Activated naive CD4-positive, alpha-beta T cell treated with anti-CD3 and anti-CD28 coated beads for 36 hours (primary cell): ENCODE measurements at regions of chr19 and their contacts with region 1.

Region 1: DNA sequence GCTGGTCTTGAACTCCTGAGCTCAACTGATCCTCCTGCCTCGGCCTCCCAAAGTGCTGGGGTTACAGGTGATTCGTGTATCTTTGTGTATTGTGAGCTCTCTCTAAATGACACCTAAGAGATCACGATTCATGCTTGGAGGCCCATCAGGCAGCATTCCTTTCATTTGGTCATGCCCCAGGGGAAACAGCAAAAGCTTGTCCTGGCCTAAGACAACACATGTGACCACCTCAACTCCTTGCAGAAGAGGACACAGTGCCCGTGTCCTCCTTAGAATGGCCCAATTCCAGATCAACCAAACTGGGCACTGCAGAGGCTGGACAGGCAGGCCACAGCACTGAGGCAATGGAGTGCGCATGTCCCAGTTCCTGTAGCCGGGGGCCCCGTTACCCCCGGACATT is 32.5 kb downstream of the ZC3H4 start:
- DNase-seq: no peak
- H3K4me3 Mint-ChIP-seq: no peak overlapping the region
- H3K27ac Mint-ChIP-seq: peak overlapping the region; percentile 66
- H3K4me1 Mint-ChIP-seq: no peaks in the 10 kb centered on the region
- H3K27me3 Mint-ChIP-seq: no peaks in the 10 kb centered on the region

Region 2: DNA sequence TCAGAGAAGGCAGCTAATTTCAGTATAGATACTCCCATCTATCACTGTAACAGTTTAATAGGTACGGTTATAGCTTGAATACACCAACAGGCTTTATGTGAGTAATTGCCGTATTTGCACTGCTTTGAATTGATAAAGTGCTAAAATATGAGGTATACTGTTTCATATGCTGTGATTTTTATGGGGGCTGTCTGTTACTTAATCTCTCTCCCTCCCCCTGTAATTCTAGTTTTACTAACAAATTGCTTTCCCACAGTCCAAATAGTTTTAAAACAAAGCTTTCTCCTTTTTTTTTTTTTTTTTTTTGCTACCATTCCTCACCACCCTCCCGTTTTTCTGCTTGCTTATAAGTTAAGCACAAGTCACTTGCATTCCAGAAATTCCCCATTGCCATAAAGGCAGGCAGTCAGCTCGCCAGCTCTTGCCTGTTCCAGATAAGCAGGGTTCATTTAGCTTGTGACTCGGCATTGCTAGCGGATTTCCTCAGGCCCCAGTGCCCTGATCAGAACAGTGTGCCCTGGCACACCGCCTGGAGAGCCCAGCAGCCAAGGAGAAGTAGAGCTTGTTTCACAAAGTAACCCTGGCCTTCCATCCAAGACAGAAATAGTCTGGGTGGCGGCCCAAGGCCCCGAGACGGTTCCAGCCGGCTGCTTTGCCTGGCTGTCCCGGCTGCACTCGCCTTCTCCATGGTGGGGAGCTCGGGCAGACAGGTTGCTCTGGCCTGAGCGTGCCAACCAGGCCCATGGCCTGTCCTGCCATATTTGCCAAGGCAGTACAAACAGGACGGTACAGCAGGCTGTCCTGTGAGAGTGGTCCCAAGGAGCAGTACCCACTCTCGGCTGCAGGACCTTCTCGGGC is 105.0 kb before region 1 on chr19:
- CTCF ChIA-PET with region 1: no interaction called
- intact Hi-C with region 1: no loop called
- DNase-seq: no peak
- H3K4me3 Mint-ChIP-seq: no peak overlapping the region
- H3K27ac Mint-ChIP-seq: no peak overlapping the region
- H3K4me1 Mint-ChIP-seq: peaks cover 5% of the 10 kb centered on the region
- H3K27me3 Mint-ChIP-seq: no peaks in the 10 kb centered on the region

Region 3: DNA sequence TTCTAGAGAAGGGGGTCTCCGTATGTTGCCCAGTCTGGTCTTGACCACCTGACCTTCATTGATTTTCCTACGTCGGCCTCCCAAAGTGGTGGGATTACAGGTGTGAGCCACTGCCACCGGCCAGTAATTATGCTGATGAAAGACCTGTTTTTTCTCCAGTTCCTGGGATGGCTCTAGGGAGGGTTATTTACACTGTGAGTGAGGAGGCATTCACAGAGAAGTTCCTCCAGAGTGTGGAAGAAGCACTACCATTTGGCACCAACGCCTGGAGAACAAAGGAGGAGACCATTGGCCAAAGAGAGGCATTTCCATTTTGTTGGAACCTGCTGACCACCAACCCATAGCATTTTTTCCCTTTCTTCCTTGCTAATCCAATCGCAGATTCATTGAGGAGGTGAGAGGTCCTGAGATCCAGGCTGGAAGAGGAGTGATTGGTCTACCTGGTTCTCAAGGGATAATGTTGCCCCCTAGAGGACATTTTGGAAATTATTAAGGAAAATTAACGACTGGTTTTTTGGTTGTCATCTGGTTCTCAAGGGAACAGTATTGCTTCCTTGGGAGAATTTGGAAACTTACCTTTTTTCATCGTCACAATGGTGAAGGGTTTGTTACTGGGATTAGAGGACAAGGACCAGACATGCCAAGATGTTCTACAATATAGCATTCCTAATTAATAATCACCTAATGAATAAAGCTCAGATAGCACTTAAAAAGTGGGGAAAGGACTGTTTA is 44.0 kb after region 1 on chr19:
- CTCF ChIA-PET with region 1: interaction called, 25 read pairs
- intact Hi-C with region 1: loop called (anchors 1 kb)
- DNase-seq: no peak
- H3K4me3 Mint-ChIP-seq: no peak overlapping the region
- H3K27ac Mint-ChIP-seq: no peak overlapping the region
- H3K4me1 Mint-ChIP-seq: peaks cover 5% of the 10 kb centered on the region
- H3K27me3 Mint-ChIP-seq: no peaks in the 10 kb centered on the region

Region 4: GRCh38 chr19:47130591-47131227 is 49.6 kb after region 1 on chr19 and contains the start of gene SAE1:
- CTCF ChIA-PET with region 1: interaction called, 25 read pairs
- intact Hi-C with region 1: loop called (anchors 1 kb)
- DNase-seq: peak; percentile 95
- H3K4me3 Mint-ChIP-seq: peak within 1 kb of the TSS; percentile 99
- H3K27ac Mint-ChIP-seq: peak within 1 kb of the TSS; percentile 99
- H3K4me1 Mint-ChIP-seq: peaks cover 41% of the 10 kb centered on the region
- H3K27me3 Mint-ChIP-seq: no peaks in the 10 kb centered on the region
- total RNA-seq, gene SAE1: 160 to 161 TPM